A549 (cell line): ENCODE measurements at regions of chr5 and their contacts with region 1.

Region 1: DNA sequence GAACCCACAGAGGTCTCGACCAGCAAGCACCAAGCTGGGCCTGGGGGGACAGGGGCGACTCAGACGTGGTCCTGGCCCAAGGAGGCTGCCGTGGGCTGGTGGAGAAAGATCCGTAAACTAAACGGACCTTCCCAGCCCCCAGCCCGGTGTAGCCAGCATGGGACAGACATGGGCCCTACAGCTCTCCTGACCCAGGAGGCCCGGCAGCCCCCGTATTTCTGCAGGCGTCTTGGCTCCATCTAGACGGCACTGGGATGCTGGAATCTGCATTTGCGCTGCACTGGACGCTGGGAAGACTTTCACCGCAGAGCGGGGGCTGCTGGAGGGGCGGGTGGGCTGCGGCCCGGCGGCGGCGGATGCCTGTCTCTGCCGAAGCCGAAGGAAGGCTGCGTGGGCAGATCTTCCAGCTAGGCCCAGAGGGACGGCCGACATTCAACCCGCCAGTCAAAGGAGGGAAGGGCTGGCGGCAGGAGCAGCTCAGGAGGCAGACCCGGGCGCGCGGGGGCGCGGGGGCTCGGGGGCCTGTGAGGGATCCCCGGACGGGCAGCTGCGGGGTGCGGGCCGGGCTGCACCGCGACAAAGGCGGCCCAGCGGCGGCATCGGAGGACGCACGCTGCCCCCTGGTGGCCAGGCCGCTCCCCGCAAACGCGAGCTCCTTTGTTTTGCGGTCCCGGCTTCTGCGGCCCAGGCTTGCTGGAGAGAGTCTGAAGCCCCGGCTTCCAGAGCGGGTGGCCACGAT is 266.2 kb downstream of the NSG2 start:
- DNase-seq: peak; percentile 54 to 61
- ATAC-seq: peak; percentile 63 to 94
- H3K4me3 ChIP-seq: peak overlapping the region; percentile 31; the same call in 2 of the 3 replicates
- H3K27ac ChIP-seq: peak overlapping the region; percentile 29 to 75; a peak in 4 of 6 replicates
- H3K4me1 ChIP-seq: no peaks in the 10 kb centered on the region
- CTCF ChIP-seq: peak; percentile 90
- EP300 ChIP-seq: no peak
- POLR2A ChIP-seq: no peak
- RAD21 ChIP-seq: peak; percentile 73 to 93

Region 2: GRCh38 chr5:173625696-173626504 is 685.8 kb before region 1 on chr5:
- CTCF ChIA-PET with region 1: interaction called, 13 read pairs
- POLR2A ChIA-PET with region 1: no interaction called
- DNase-seq: no peak
- ATAC-seq: peak; percentile 44 to 67; a peak in 4 of 6 replicates
- H3K4me3 ChIP-seq: no peak overlapping the region
- H3K27ac ChIP-seq: peak overlapping the region; percentile 45 to 76; a peak in 5 of 6 replicates
- H3K4me1 ChIP-seq: peaks cover 28% of the 10 kb centered on the region
- CTCF ChIP-seq: no peak; the same call in 2 of the 3 replicates
- EP300 ChIP-seq: no peak
- POLR2A ChIP-seq: no peak
- RAD21 ChIP-seq: peak; percentile 23 to 52; a peak in 3 of 5 replicates

Region 3: DNA sequence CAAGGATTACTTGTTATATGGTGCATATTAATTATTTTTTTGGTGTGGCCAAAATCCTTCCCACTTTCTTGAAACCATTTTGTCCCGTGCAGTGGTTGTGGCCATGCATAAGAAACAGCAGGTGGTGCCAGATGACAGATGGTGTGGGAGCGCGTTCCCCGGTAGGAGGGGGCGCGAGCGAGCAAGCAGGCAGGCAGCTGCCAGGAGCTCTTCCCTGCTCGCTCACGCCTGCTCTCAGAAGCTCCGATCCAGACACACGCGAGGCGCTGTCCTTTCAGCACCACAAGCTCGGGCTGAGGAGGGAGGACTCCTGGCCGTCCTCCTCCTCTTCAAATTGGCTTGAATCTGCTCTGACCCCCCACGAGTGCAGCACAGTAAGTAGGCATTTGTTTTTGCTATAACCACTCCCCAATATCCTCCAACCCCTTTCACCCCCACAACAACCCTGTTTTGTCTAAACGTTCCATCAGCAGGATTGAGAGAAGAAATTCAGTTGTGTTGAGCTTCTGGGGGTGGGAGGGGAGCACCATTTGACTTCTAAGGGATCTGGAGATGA is 266.2 kb before region 1 on chr5 and contains the start of gene NSG2:
- CTCF ChIA-PET with region 1: interaction called, 422 read pairs
- POLR2A ChIA-PET with region 1: interaction called, 14 read pairs
- DNase-seq: peak; percentile 72 to 91
- ATAC-seq: peak; percentile 99 to 100
- H3K4me3 ChIP-seq: no peak within 1 kb of the TSS
- H3K27ac ChIP-seq: no peak within 1 kb of the TSS
- H3K4me1 ChIP-seq: no peaks in the 10 kb centered on the region
- CTCF ChIP-seq: peak; percentile 81
- EP300 ChIP-seq: no peak
- POLR2A ChIP-seq: no peak
- RAD21 ChIP-seq: peak; percentile 92
- polyA plus RNA-seq, gene NSG2: 0.05 and 0.06 TPM in 2 replicates

Region 4: GRCh38 chr5:174295702-174296436 is 15.8 kb before region 1 on chr5:
- CTCF ChIA-PET with region 1: interaction called, 52 read pairs
- POLR2A ChIA-PET with region 1: no interaction called
- DNase-seq: no peak
- ATAC-seq: no peak
- H3K4me3 ChIP-seq: no peak overlapping the region
- H3K27ac ChIP-seq: no peak overlapping the region
- H3K4me1 ChIP-seq: no peaks in the 10 kb centered on the region
- CTCF ChIP-seq: no peak
- EP300 ChIP-seq: no peak
- POLR2A ChIP-seq: no peak
- RAD21 ChIP-seq: no peak

Region 5: GRCh38 chr5:174327317-174328236 is 15.9 kb after region 1 on chr5:
- CTCF ChIA-PET with region 1: interaction called, 41 read pairs
- POLR2A ChIA-PET with region 1: no interaction called
- DNase-seq: peak; percentile 78 to 83
- ATAC-seq: peak; percentile 75 to 94
- H3K4me3 ChIP-seq: no peak overlapping the region
- H3K27ac ChIP-seq: peak overlapping the region; percentile 17 to 73; a peak in 3 of 6 replicates
- H3K4me1 ChIP-seq: peaks cover 9% of the 10 kb centered on the region; the same call in 1 of the 3 replicates
- CTCF ChIP-seq: peak; percentile 85
- EP300 ChIP-seq: no peak
- POLR2A ChIP-seq: no peak
- RAD21 ChIP-seq: peak; percentile 74 to 76